Right ventricle myocardium inferior (tissue), 1 donor: ENCODE measurements at regions of chr14 and their contacts with region 1.

Region 1: DNA sequence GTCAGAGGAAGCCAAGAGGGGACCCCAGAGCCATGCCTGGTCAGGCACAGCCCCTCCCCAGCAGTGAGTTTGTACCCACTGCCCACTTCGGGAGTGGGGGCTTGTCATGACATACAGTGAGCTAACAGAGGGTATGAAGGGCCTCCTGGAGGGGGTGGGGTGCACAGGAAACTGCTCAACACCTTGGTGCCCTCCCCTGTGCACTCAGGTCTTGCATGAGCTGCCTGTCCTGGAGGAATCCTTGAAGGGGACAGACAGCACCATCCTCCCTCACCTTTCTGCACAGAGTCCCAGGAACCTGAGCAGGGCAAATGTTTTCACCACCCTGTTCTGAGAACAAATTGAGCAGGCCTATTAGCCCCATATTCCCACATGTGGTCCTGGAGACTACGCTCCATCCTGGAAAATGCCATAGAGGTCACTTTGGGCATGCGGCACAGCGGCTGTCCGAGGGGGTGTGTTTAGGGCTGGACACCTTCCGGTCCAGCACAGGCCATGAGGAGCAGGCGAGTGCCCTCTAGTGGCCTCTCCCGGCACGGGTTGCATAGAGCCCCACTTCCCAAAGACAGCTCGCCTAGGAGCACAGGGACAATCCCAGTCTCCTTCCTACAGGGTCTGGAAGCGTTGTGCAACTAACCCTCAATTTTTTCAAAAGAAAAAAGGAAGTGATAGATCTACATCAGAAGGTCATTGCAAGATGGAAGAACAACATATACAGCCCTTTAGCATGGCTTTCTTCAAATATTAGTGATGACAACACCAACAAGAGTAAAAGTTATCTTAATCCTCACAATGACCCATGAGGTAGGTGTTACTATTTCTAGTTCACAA is 31.9 kb upstream of the ZFP36L1 start:
- DNase-seq: peak; percentile 94
- ATAC-seq: peak; percentile 96

Region 2: DNA sequence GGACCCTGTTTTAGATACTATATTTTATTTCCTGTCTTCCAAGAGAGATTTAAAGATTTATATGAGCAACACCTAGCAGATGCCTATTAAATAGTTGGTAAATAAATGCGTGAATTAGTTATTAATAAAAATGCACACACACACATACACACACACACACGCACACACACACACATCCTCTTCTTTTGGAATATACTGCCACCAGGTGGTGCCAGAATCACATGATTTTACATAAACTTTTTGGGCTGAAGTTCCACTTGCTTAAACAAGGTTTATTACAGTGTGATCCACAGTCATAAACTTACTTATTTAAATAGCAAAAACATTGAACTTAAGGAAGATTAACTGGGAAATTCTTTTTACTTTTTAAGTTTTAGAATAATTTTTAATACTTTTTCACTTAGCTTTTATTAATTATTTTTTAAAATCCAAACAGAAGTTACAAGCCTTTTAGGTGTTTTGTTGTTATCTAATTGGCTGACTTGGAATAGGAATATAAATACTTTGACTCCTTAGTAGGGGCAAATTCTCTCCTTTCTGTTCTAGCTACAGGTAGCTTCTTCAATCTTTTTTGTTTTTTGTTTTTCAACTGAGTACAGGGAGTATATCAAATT is 987.6 kb before region 1 on chr14:
- intact Hi-C with region 1: loop called (anchors 5 kb)
- DNase-seq: no peak
- ATAC-seq: no peak

Region 3: DNA sequence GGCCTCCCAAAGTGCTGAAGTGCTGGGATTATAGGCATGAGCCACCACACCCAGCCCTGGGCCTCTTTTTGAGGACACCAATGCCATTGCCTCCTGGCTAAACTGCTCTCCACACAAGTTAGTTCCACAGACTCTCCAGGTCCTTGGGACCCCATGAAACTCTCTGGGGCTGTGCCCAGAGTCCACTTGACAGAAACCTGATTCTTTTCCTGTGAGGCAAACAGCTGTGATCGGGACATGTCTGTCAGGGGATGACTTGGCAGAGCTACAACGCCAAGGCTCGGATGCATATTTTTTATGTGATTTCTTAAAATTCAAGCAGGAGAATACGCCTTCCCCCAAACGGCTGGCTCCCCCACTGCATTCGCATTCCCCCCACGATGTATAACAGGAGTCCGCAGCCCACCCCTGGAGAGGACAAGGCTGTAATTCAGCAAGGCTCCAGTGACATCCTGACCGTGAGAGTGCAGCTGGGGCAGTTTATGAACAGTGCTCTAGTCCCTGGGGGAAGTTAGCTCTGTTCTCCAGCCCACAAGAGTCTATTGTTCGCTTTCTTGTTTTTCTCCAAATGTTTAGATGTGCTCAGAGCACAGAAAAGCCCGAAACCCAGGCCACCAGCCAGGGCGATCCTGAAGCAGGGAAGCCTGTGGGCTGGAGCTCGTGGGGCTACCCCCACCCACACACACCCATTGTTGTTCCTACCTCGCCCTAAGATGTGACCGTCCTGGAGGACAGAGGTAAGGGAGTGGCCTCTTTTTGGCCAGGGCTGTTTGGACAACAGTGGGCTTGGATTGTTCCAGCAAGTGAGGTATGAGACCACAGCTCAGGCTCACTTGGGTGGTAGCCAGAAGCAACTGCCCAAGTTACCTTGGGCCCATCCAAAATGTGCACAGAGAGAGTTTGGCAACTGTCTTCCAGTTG is 191.4 kb before region 1 on chr14:
- intact Hi-C with region 1: no loop called
- DNase-seq: peak; percentile 75
- ATAC-seq: peak; percentile 81

Region 4: DNA sequence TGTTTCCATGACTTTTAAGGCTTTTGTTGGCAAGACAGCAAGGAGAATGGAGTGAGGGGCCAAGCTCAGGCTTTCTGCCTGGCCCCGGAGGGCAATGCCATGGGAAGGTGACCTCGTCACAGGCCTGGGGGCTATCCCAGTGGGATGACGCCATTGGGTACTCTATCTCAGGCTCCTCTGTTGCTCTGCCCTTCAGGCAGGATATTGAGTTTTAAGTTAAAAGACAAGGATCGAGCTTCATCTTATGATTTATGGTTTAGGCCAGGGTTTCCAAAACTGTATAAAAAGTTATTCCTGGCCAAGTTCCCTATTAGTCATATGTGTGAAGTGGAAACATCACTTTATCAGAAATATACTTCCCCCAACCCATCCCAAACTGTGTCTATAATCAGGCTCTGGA is 159.6 kb before region 1 on chr14:
- intact Hi-C with region 1: no loop called
- DNase-seq: no peak
- ATAC-seq: no peak

Region 5: DNA sequence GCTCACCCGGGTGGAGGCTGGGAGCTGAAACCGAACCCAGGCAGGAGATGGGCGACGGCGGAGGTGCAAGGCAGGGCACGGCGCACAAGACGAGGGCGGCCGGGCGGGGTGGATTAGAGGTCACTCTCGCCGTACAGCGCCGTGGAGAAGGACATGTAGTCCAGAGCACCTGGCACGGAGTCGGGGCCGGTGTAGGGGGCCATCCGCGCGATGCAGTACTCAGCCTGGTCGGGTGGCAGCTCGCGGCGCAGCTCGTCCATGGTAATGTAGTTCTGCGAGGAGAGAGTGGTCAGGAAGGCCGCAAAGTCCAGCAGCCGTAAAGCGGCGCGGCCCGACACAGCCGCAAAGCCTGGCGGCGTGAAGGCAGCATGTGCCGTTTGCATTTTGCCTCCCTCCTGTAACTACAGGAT is 50.0 kb after region 1 on chr14:
- intact Hi-C with region 1: no loop called
- DNase-seq: no peak
- ATAC-seq: no peak